H1 (cell line): ENCODE measurements at regions of chr4 and their contacts with region 1.

Region 1: GRCh38 chr4:7843831-7844593 is 95.6 kb downstream of the AFAP1 start:
- DNase-seq: peak; percentile 63 to 90
- H3K4me3 ChIP-seq: no peak overlapping the region
- H3K27ac ChIP-seq: no peak overlapping the region
- H3K4me1 ChIP-seq: peaks cover 0 to 3% (median 3%) of the 10 kb centered on the region in 4 experiments; a peak in 4 of 7 replicates
- H3K27me3 ChIP-seq: no peaks in the 10 kb centered on the region
- CTCF ChIP-seq: peak; percentile 80 to 85 (median 84)
- EP300 ChIP-seq: no peak
- POLR2A ChIP-seq: no peak
- RAD21 ChIP-seq: peak; percentile 53 to 71

Region 2: GRCh38 chr4:7649741-7650531 is 194.1 kb before region 1 on chr4:
- CTCF ChIA-PET with region 1: no interaction called
- POLR2A ChIA-PET with region 1: no interaction called
- DNase-seq: no peak
- H3K4me3 ChIP-seq: no peak overlapping the region
- H3K27ac ChIP-seq: no peak overlapping the region
- H3K4me1 ChIP-seq: peaks cover 0 to 14% (median 12%) of the 10 kb centered on the region in 4 experiments; a peak in 6 of 7 replicates
- H3K27me3 ChIP-seq: no peaks in the 10 kb centered on the region
- CTCF ChIP-seq: no peak
- EP300 ChIP-seq: no peak
- POLR2A ChIP-seq: no peak
- RAD21 ChIP-seq: no peak

Region 3: DNA sequence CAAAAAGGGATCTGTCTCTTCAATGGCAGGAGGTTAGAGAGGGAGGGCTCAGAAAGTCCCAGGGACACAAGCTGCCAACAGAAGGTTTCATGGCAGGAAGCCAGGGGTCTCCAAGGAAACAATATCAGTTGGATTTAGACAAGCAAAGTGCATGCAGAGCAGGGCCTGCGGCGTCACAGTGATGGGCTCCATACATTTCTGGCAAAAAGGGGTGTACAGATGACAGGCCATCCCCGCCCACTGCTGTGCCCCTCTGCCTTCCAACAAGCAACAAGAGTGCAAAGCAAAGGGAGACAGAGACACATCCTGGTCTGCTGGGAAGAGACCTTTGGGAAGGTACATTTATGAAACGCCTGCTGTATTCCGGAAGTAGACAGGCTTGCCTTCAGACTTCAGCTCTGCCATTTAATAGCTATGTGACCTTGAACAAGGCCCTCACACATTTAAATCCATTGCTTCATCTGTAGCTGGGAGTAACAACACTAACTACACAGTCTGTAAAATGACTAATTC is 25.6 kb before region 1 on chr4:
- CTCF ChIA-PET with region 1: interaction called, 33 read pairs
- POLR2A ChIA-PET with region 1: no interaction called
- DNase-seq: no peak
- H3K4me3 ChIP-seq: no peak overlapping the region
- H3K27ac ChIP-seq: no peak overlapping the region
- H3K4me1 ChIP-seq: peaks cover 0 to 5% (median 2%) of the 10 kb centered on the region in 4 experiments; a peak in 1 of 7 replicates
- H3K27me3 ChIP-seq: no peaks in the 10 kb centered on the region
- CTCF ChIP-seq: no peak
- EP300 ChIP-seq: no peak
- POLR2A ChIP-seq: no peak
- RAD21 ChIP-seq: no peak

Region 4: GRCh38 chr4:7854697-7855370 is 10.8 kb after region 1 on chr4:
- CTCF ChIA-PET with region 1: interaction called, 22 read pairs
- POLR2A ChIA-PET with region 1: interaction called, 3 read pairs
- DNase-seq: no peak
- H3K4me3 ChIP-seq: no peak overlapping the region
- H3K27ac ChIP-seq: no peak overlapping the region
- H3K4me1 ChIP-seq: peaks cover 0 to 4% (median 1%) of the 10 kb centered on the region in 4 experiments; a peak in 1 of 7 replicates
- H3K27me3 ChIP-seq: no peaks in the 10 kb centered on the region
- CTCF ChIP-seq: no peak
- EP300 ChIP-seq: no peak
- POLR2A ChIP-seq: no peak
- RAD21 ChIP-seq: no peak

Region 5: DNA sequence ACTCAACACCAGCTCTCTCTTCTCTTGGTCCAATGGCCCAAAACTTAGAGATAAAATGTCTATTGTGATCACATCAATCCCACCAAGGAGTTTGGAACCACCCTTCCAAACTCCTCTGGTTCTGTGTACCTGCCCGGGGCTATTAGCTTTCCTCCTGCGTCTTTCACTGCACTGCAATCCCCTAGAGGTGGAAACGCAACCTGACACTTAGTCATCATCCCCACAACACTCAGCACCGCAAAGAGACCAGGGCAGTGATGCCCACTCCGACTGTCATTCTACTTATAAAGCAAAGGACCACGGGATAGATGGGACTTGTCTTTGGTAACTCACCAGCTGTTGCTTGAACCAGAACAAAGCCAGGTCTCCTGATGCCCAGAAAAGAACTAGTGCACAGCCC is 73.7 kb after region 1 on chr4:
- CTCF ChIA-PET with region 1: interaction called, 12 read pairs
- POLR2A ChIA-PET with region 1: no interaction called
- DNase-seq: no peak
- H3K4me3 ChIP-seq: no peak overlapping the region
- H3K27ac ChIP-seq: no peak overlapping the region
- H3K4me1 ChIP-seq: peaks cover 0 to 8% (median 1%) of the 10 kb centered on the region in 4 experiments; a peak in 5 of 7 replicates
- H3K27me3 ChIP-seq: no peaks in the 10 kb centered on the region
- CTCF ChIP-seq: peak; percentile 12 to 31 (median 13); a peak in 3 of 4 replicates
- EP300 ChIP-seq: no peak
- POLR2A ChIP-seq: no peak
- RAD21 ChIP-seq: no peak; a peak in 1 of 4 replicates

Region 6: GRCh38 chr4:7960790-7961655 is 117.0 kb after region 1 on chr4:
- CTCF ChIA-PET with region 1: interaction called, 10 read pairs
- POLR2A ChIA-PET with region 1: no interaction called
- DNase-seq: no peak
- H3K4me3 ChIP-seq: no peak overlapping the region
- H3K27ac ChIP-seq: no peak overlapping the region
- H3K4me1 ChIP-seq: peaks cover 3 to 12% (median 7%) of the 10 kb centered on the region in 4 experiments
- H3K27me3 ChIP-seq: no peaks in the 10 kb centered on the region
- CTCF ChIP-seq: no peak
- EP300 ChIP-seq: no peak
- POLR2A ChIP-seq: no peak
- RAD21 ChIP-seq: no peak